ENCODE measurements at regions of chr15 and their contacts with region 1.

Region 1: GRCh38 chr15:31870328-31871165 is 159.8 kb upstream of the CHRNA7 start:
- DNase-seq: peak; percentile 86 to 96
- H3K4me3 ChIP-seq: peak within 1 kb of the TSS; percentile 59 to 79 (median 68)
- H3K27ac ChIP-seq: peak within 1 kb of the TSS; percentile 75 to 88 (median 83)
- H3K4me1 ChIP-seq: peaks cover 6 to 14% (median 12%) of the 10 kb centered on the region in 4 donors
- H3K27me3 ChIP-seq: no peaks in the 10 kb centered on the region
- CTCF ChIP-seq: no peak
- EP300 ChIP-seq: no peak
- POLR2A ChIP-seq: no peak

Region 2: DNA sequence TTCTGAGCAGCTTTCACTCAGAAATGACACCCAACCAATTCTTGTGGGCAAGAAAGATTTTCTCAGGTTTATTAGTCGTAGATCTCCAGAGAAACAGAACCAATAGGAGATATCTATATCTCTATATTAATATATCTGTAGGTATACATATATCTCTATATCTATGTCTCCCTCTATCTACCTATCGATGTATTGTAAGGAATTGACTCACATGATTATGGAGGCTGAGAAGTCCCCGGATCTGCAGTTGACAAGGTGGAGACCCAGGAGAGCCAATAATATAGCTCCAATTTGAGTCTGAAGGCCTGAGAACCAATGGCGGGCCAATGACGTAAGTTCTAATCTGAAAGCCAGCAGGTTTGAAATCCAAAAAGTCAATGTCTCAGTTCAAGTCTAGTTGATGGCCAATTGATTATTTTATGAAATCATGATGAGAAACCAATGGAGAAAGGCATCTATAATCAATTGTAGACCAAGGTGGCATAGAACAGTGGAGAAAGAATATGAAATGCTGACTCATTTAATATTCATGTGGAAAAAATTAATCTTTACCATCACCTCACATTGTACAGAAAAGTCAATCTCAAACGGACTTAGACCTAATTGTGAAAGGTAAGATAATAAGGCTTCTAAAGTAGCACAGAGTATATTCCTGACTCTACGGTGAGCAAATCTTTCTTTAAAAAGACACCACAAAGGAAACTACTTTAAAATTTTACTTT is 94.2 kb after region 1 on chr15:
- intact Hi-C with region 1: no loop called
- DNase-seq: no peak
- H3K4me3 ChIP-seq: no peak overlapping the region
- H3K27ac ChIP-seq: no peak overlapping the region
- H3K4me1 ChIP-seq: no peaks in the 10 kb centered on the region
- H3K27me3 ChIP-seq: peaks cover 0 to 14% (median 0%) of the 10 kb centered on the region in 3 donors
- CTCF ChIP-seq: no peak
- EP300 ChIP-seq: no peak
- POLR2A ChIP-seq: no peak

Region 3: DNA sequence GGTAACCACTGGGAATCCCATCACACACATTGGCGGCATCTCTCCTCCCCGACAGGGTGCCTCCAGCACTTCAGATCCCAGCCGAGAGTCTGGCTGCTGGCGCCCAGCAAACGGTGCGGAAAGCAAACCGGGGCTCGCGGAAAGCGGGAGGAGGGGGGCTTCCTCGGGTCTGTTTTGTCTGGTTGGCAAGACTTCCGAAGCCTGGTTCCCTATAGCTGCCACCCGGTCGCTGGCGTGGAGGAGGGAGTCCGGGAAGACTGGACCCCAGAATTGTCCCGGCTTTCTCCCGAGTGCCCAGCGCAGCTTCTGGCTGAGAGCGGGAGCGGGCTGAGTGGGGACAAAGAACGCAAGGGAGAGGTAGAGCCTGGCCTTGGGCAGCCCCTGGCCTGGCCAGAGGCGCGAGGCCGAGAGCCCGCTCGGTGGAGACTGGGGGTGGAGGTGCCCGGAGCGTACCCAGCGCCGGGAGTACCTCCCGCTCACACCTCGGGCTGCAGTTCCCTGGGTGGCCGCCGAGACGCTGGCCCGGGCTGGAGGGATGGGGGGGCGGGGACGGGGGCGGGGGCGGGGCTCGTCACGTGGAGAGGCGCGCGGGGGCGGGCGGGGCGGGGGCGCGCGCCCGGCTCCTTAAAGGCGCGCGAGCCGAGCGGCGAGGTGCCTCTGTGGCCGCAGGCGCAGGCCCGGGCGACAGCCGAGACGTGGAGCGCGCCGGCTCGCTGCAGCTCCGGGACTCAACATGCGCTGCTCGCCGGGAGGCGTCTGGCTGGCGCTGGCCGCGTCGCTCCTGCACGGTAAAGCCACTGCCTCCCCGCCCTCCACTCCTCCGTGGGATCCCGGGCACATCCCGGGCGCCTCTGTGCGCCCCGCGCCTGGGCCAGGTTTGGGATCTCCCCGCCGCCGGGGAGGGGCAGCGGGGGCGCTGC is 159.6 kb after region 1 on chr15 and contains the start of gene CHRNA7:
- intact Hi-C with region 1: loop called (anchors 10 kb)
- DNase-seq: peak; percentile 76 to 89
- H3K4me3 ChIP-seq: peak within 1 kb of the TSS; percentile 57 to 81 (median 62)
- H3K27ac ChIP-seq: peak within 1 kb of the TSS; percentile 50 to 79 (median 69)
- H3K4me1 ChIP-seq: peaks cover 7 to 33% (median 26%) of the 10 kb centered on the region in 4 donors
- H3K27me3 ChIP-seq: peaks cover 0 to 57% (median 18%) of the 10 kb centered on the region in 3 donors
- CTCF ChIP-seq: peak in 4 of 7 experiments; percentile 24 to 62 (median 42)
- EP300 ChIP-seq: no peak
- POLR2A ChIP-seq: no peak
- total RNA-seq, gene CHRNA7: 11.4 to 131 (median 39.7) TPM

Measured in stomach (tissue), 19 donors.